CD4-positive, alpha-beta memory T cell (primary cell): ENCODE measurements at regions of chr3 and their contacts with region 1.

Region 1: GRCh38 chr3:195863121-195864006 is 45.0 kb downstream of the TNK2 start:
- DNase-seq: peak; percentile 30 to 54 (median 43)
- H3K4me3 ChIP-seq: no peak overlapping the region
- H3K4me3 Mint-ChIP-seq: no peak overlapping the region
- H3K27ac ChIP-seq: no peak overlapping the region
- H3K27ac Mint-ChIP-seq: peak overlapping the region in 2 of 7 donors; percentile 47 to 48
- H3K4me1 ChIP-seq: peaks cover 8% of the 10 kb centered on the region
- H3K4me1 Mint-ChIP-seq: peaks cover 5 to 8% (median 7%) of the 10 kb centered on the region in 4 donors
- H3K27me3 ChIP-seq: no peaks in the 10 kb centered on the region
- H3K27me3 Mint-ChIP-seq: no peaks in the 10 kb centered on the region

Region 2: GRCh38 chr3:195450731-195451229 is 412.6 kb before region 1 on chr3:
- CTCF ChIA-PET with region 1: no interaction called
- POLR2A ChIA-PET with region 1: no interaction called
- intact Hi-C with region 1: no loop called
- DNase-seq: no peak
- H3K4me3 ChIP-seq: no peak overlapping the region
- H3K4me3 Mint-ChIP-seq: no peak overlapping the region
- H3K27ac ChIP-seq: no peak overlapping the region
- H3K27ac Mint-ChIP-seq: no peak overlapping the region
- H3K4me1 ChIP-seq: no peaks in the 10 kb centered on the region
- H3K4me1 Mint-ChIP-seq: peaks cover 5 to 20% (median 8%) of the 10 kb centered on the region in 4 donors
- H3K27me3 ChIP-seq: no peaks in the 10 kb centered on the region
- H3K27me3 Mint-ChIP-seq: peaks cover 0 to 3% of the 10 kb centered on the region in 2 donors

Region 3: GRCh38 chr3:195738274-195739044 is 124.9 kb before region 1 on chr3:
- CTCF ChIA-PET with region 1: no interaction called
- POLR2A ChIA-PET with region 1: no interaction called
- intact Hi-C with region 1: no loop called
- DNase-seq: no peak
- H3K4me3 ChIP-seq: no peak overlapping the region
- H3K4me3 Mint-ChIP-seq: no peak overlapping the region
- H3K27ac ChIP-seq: no peak overlapping the region
- H3K27ac Mint-ChIP-seq: no peak overlapping the region
- H3K4me1 ChIP-seq: no peaks in the 10 kb centered on the region
- H3K4me1 Mint-ChIP-seq: no peaks in the 10 kb centered on the region
- H3K27me3 ChIP-seq: no peaks in the 10 kb centered on the region
- H3K27me3 Mint-ChIP-seq: peaks cover 0 to 3% of the 10 kb centered on the region in 2 donors

Region 4: DNA sequence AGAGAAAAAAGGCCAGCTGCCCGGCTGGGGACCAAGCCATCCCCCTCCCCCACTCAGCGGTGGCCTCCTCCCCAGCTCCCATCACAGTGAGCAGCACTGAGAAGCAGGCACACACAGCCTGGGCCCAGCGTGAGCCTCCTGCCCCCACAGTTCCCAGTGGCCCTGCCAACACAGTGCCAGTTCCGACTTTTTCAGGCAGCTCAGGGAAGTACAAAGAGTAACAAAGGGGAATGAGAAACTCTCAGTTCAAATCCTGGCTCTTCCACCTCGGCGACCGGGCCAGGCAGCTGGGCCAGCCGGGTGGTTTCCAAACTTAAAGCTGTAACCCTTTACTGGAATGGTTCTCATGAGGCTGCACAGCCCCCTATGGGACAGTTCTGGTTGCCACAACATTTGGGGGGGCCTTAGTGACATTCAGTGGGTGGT is 26.5 kb after region 1 on chr3:
- CTCF ChIA-PET with region 1: interaction called, 43 read pairs
- POLR2A ChIA-PET with region 1: interaction called, 6 read pairs
- intact Hi-C with region 1: loop called (anchors 1 kb)
- DNase-seq: no peak
- H3K4me3 ChIP-seq: no peak overlapping the region
- H3K4me3 Mint-ChIP-seq: no peak overlapping the region
- H3K27ac ChIP-seq: no peak overlapping the region
- H3K27ac Mint-ChIP-seq: peak overlapping the region in 2 of 7 donors; percentile 15 to 36
- H3K4me1 ChIP-seq: peaks cover 19% of the 10 kb centered on the region
- H3K4me1 Mint-ChIP-seq: peaks cover 6 to 33% (median 10%) of the 10 kb centered on the region in 4 donors
- H3K27me3 ChIP-seq: no peaks in the 10 kb centered on the region
- H3K27me3 Mint-ChIP-seq: no peaks in the 10 kb centered on the region

Region 5: DNA sequence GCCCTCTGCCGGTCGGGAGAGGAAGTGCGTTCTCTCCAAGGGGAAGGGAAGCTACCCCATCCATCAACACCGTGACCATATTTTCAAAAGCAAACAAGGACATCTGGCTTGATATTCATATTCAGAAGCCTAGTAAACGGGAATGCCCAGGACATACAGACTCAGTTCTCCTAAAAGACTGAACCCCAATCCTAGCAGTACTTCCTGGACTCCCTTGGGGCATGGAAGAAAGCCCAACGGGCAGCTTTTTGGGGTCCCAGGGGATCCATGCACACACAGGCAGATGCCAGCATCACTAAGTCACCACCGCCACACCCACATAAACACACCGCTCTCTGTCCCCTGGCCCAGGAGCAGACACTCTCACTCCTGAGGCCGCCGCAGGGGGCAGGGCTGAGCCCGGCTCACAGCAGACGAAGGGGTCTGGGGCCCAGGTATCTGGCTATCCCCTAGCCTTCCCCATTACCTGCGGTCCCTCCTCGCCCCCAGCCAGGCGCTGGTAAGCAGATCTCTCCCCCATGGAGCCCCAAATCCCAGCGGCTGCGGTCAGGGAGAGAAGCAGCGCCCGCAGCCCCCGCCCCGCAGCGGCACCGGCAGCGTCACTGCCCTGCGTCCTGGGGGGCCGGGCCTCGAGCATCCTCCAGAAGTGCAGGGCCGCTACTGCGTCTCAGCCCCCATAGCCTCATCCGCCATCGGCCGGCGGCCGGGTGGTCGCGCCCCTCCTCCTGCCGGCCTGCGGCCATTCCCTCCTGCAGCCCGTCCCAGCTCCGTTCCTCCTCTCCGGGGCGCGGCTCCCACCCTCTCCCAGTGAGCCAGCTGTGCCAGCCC is 31.6 kb after region 1 on chr3:
- CTCF ChIA-PET with region 1: interaction called, 43 read pairs
- POLR2A ChIA-PET with region 1: interaction called, 6 read pairs
- intact Hi-C with region 1: loop called (anchors 1 kb)
- DNase-seq: peak; percentile 68 to 81 (median 75)
- H3K4me3 ChIP-seq: peak overlapping the region; percentile 25 to 77
- H3K4me3 Mint-ChIP-seq: peak overlapping the region; percentile 88 to 98 (median 92)
- H3K27ac ChIP-seq: peak overlapping the region; percentile 86
- H3K27ac Mint-ChIP-seq: peak overlapping the region; percentile 92 to 96 (median 94)
- H3K4me1 ChIP-seq: peaks cover 47% of the 10 kb centered on the region
- H3K4me1 Mint-ChIP-seq: peaks cover 28 to 53% (median 39%) of the 10 kb centered on the region in 4 donors
- H3K27me3 ChIP-seq: no peaks in the 10 kb centered on the region
- H3K27me3 Mint-ChIP-seq: no peaks in the 10 kb centered on the region

Region 6: GRCh38 chr3:195909644-195910508 is 46.5 kb after region 1 on chr3:
- CTCF ChIA-PET with region 1: interaction called, 234 read pairs
- POLR2A ChIA-PET with region 1: interaction called, 10 read pairs
- intact Hi-C with region 1: loop called (anchors 1 kb)
- DNase-seq: peak; percentile 86 to 88 (median 87)
- H3K4me3 ChIP-seq: peak overlapping the region; percentile 42 to 47
- H3K4me3 Mint-ChIP-seq: peak overlapping the region; percentile 57 to 79 (median 65)
- H3K27ac ChIP-seq: peak overlapping the region; percentile 58
- H3K27ac Mint-ChIP-seq: peak overlapping the region in 6 of 7 donors; percentile 46 to 88 (median 76)
- H3K4me1 ChIP-seq: peaks cover 43% of the 10 kb centered on the region
- H3K4me1 Mint-ChIP-seq: peaks cover 22 to 46% (median 33%) of the 10 kb centered on the region in 4 donors
- H3K27me3 ChIP-seq: no peaks in the 10 kb centered on the region
- H3K27me3 Mint-ChIP-seq: no peaks in the 10 kb centered on the region